Heart right ventricle (tissue), 16 donors: ENCODE measurements at regions of chr11 and their contacts with region 1.

Region 1: DNA sequence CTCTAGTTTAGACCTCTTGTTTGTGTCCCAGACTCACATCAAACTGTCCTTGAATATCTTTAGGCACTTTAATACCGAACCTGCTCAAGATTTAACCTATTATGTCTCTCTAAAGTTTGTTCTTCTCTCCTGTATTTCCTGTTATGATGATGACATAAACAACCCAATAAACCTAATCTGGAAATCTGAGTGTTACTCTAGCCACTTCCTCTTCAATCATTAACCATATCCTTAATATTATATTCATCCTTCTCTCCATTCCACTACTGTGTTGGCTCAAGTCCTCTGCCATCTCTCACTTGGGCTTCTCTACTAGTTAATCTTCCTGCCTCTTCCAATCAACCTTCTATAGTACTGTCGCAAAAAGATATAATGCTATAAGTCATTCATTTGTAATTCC is 36.0 kb downstream of the COPB1 start:
- DNase-seq: no peak
- ATAC-seq: no peak
- H3K4me3 ChIP-seq: no peak overlapping the region
- H3K27ac ChIP-seq: no peak overlapping the region
- H3K4me1 ChIP-seq: peaks cover 0 to 11% (median 0%) of the 10 kb centered on the region in 9 donors
- H3K27me3 ChIP-seq: no peaks in the 10 kb centered on the region
- CTCF ChIP-seq: no peak

Region 2: DNA sequence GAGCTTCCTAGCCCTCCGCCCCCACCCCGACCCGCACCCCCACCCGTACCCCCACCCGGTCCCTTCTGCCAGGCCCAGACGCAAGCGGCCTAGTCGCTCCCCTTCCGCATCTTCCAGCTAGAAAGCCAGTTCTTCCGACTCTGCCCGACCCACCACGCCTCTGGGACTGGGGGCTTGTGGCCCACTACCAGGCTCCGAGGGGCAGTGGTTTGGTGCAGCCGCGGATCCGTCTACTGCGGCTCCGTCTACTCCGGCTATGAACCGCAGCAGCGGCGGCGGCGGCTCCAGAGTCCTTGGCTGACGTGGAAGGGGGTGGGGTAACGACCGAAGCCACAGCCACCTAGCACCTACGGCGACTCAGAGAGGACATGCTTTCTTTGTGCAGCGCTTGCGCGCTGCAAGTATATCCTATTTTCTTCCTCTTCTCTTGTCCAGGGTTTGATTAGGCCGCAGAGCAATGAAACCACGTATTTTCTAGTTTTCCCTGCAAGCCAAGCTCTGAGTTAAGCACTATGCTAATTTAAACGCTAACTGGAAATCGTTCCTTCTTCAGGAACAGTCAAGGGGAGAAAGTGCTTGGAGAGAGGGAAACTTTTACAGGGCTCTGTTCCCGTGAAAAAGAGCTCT is 36.0 kb after region 1 on chr11 and contains the start of gene COPB1:
- intact Hi-C with region 1: loop called in 2 of 10 experiments (anchors 5 kb)
- DNase-seq: peak; percentile 89 to 96
- ATAC-seq: peak; percentile 99 to 100 (median 99)
- H3K4me3 ChIP-seq: peak within 1 kb of the TSS; percentile 72 to 84 (median 78)
- H3K27ac ChIP-seq: peak within 1 kb of the TSS; percentile 67 to 94 (median 91)
- H3K4me1 ChIP-seq: peaks cover 0 to 53% (median 30%) of the 10 kb centered on the region in 9 donors
- H3K27me3 ChIP-seq: no peaks in the 10 kb centered on the region
- CTCF ChIP-seq: no peak
- total RNA-seq, gene COPB1: 40.2 to 60.0 (median 47.9) TPM